Activated CD4-positive, alpha-beta memory T cell treated with anti-CD3 and anti-CD28 coated beads, Interleukin-2, amount 10 ng/mL, durations not matched to agents 7 days and 5 days (primary cell): ENCODE measurements at regions of chr4 and their contacts with region 1.

Region 1: GRCh38 chr4:153585026-153585425 is 99.1 kb upstream of the TLR2 start:
- DNase-seq: no peak
- H3K4me3 Mint-ChIP-seq: no peak overlapping the region
- H3K27ac Mint-ChIP-seq: no peak overlapping the region
- H3K4me1 Mint-ChIP-seq: peaks cover 7% of the 10 kb centered on the region
- H3K27me3 Mint-ChIP-seq: no peaks in the 10 kb centered on the region

Region 2: DNA sequence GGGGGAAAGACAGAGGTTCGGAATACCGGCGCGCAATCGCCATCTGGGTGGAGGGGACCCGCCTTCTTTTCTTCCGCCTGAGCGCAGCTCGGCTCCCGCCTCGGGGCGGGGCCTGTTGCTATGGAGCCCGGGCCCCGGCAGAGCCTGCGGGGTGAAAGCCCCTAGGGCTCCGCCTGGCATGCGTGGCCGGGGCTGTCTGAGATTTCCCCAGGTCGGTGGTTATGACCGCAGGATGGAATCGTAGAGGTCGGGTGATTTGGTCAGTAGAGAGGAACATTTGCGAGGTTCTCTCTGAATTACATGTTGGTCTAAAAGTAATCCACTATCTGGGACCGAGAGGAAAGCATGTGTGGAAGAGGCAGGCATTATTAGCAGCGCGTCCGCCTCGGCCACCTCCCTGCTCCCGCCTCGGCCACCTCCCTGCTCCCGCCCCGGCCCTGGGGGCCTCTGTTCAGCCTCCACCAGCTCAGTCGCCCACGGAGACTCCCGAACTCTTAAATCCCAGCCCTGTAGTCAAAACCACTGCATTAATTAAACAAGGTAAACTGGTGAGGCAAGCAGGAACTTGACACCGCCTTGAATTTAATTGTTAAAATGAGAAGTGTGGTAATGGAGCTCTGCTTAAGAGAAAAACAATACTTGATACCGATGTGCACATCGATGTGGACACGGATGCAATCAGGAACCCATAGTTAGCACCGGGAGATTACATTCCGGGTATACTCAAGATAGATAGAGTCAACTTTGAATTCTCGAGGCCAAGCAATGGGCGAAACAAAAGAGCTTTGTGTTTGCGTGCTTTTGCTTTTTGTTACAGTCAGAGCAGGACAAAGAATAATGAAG is 335.6 kb before region 1 on chr4:
- CTCF ChIA-PET with region 1: no interaction called
- POLR2A ChIA-PET with region 1: no interaction called
- DNase-seq: peak; percentile 78
- H3K4me3 Mint-ChIP-seq: peak overlapping the region; percentile 81
- H3K27ac Mint-ChIP-seq: peak overlapping the region; percentile 28
- H3K4me1 Mint-ChIP-seq: peaks cover 15% of the 10 kb centered on the region
- H3K27me3 Mint-ChIP-seq: peaks cover 2% of the 10 kb centered on the region

Region 3: GRCh38 chr4:153573881-153574802 is 10.9 kb before region 1 on chr4:
- CTCF ChIA-PET with region 1: interaction called, 10 read pairs
- POLR2A ChIA-PET with region 1: no interaction called
- DNase-seq: peak; percentile 77
- H3K4me3 Mint-ChIP-seq: no peak overlapping the region
- H3K27ac Mint-ChIP-seq: peak overlapping the region; percentile 9
- H3K4me1 Mint-ChIP-seq: peaks cover 31% of the 10 kb centered on the region
- H3K27me3 Mint-ChIP-seq: no peaks in the 10 kb centered on the region